Naive thymus-derived CD4-positive, alpha-beta T cell (primary cell): ENCODE measurements at regions of chr1 and their contacts with region 1.

Region 1: DNA sequence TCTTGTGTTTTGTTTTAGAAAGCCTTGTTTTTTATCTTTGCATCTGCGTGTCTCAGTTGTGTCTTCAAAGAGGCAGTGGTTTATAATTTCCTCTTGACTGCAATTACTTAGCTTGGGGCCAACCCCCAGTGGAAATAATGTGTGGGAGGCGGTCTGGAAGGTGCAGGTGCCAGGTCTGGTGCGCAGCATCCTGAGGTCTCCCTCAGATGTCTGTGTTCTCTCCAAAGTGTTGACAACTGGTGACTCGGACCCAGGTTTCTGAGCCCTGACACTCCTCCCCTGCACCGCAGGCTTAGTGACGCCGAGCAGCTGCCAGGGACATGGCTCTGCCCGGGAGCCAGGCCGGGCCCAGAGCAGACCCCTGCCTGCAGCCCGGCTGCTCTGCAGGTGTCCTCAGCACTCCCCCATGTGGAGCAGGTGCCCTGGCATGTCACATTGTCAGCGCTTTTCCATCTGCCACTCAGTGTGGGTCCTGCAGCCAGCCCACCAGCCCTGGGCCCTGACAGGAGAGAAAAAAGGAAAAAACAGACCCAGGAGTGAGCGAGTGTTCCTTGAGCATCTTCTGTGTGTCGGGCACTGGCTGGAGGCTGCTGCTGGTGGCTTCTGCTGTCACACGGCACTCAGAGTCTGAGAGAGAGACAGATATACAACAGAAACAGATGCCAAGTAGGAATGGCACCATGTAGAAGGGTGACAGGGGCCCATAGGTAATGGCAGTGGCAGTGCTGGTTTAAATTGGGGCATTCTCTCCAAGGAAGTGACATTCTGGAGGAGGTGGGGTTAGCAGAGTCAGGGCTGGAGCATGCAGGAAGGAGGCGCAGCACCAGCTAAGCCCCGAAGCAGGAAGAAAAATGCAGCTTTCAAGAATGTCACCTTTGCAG is 24.8 kb upstream of the SELENON start:
- DNase-seq: peak; percentile 53 to 97 (median 95)
- ATAC-seq: peak; percentile 92
- H3K4me3 ChIP-seq: peak overlapping the region; percentile 49
- H3K4me3 Mint-ChIP-seq: peak overlapping the region; percentile 71 to 91 (median 84)
- H3K27ac ChIP-seq: peak overlapping the region; percentile 77
- H3K27ac Mint-ChIP-seq: peak overlapping the region; percentile 79 to 99 (median 97)
- H3K4me1 ChIP-seq: peaks cover 35 to 78% of the 10 kb centered on the region in 2 donors
- H3K4me1 Mint-ChIP-seq: peaks cover 52 to 96% (median 86%) of the 10 kb centered on the region in 7 donors
- H3K27me3 ChIP-seq: no peaks in the 10 kb centered on the region
- H3K27me3 Mint-ChIP-seq: peaks cover 0 to 45% (median 0%) of the 10 kb centered on the region in 5 donors

Region 2: DNA sequence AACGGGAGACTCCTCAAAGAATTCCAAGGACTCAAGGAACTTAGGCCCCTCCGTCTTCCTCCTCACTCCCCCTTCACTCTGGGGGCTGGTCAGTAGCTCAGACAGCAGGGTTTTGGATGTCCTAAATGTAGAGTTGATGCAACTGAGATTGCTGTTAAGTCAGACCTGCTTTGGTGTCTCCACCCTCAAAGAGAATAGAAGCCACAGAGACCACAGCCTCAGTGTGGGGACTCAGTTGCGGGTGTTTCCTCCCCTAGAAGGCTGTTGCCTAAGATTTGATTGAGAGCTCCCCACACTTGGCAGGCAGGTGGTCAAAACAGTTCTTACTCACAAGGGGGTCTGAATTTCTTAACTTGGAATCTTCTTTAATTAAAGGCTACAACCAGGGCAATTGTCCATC is 151.0 kb before region 1 on chr1:
- CTCF ChIA-PET with region 1: interaction called, 15 read pairs
- POLR2A ChIA-PET with region 1: interaction called, 26 read pairs
- intact Hi-C with region 1: loop called (anchors 1 to 2 kb)
- DNase-seq: peak in 5 of 9 donors; percentile 43 to 54 (median 51)
- ATAC-seq: peak; percentile 18
- H3K4me3 ChIP-seq: peak overlapping the region; percentile 12
- H3K4me3 Mint-ChIP-seq: peak overlapping the region; percentile 77 to 100 (median 98)
- H3K27ac ChIP-seq: peak overlapping the region; percentile 51
- H3K27ac Mint-ChIP-seq: peak overlapping the region; percentile 47 to 98 (median 92)
- H3K4me1 ChIP-seq: peaks cover 23 to 48% of the 10 kb centered on the region in 2 donors
- H3K4me1 Mint-ChIP-seq: peaks cover 66 to 98% (median 87%) of the 10 kb centered on the region in 7 donors
- H3K27me3 ChIP-seq: no peaks in the 10 kb centered on the region
- H3K27me3 Mint-ChIP-seq: peaks cover 0 to 82% (median 0%) of the 10 kb centered on the region in 5 donors

Region 3: DNA sequence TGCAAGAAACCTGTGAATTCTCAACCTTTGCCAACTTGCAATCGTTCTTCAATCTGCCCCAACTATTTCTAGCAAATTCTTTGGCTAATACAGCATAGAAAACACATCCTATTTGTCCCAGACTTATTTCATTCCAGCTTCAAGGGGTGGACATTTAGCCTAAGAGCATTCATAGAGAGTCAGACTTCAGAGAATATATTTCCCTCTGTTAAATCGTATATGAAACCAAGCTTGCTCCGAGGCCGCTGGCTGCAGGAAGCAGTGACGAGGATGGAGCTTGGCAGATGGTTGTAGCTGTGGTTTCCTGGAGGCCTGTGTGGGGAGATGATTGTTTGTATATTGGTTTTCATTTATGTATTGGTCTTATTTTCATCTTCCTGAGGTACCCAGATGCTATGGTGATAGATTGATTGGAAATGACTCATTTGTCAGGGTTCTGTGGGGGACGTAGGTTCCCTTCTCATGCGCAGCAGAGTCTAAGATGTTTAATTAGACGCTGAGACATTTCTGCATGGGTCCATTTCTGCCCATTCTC is 132.5 kb before region 1 on chr1:
- CTCF ChIA-PET with region 1: interaction called, 6 read pairs
- POLR2A ChIA-PET with region 1: interaction called, 12 read pairs
- intact Hi-C with region 1: loop called in 1 of 2 experiments (anchors 1 kb)
- DNase-seq: peak; percentile 29 to 88 (median 84)
- ATAC-seq: peak; percentile 96
- H3K4me3 ChIP-seq: peak overlapping the region; percentile 53
- H3K4me3 Mint-ChIP-seq: peak overlapping the region; percentile 43 to 89 (median 72)
- H3K27ac ChIP-seq: peak overlapping the region; percentile 77
- H3K27ac Mint-ChIP-seq: peak overlapping the region; percentile 81 to 96 (median 92)
- H3K4me1 ChIP-seq: peaks cover 20 to 65% of the 10 kb centered on the region in 2 donors
- H3K4me1 Mint-ChIP-seq: peaks cover 54 to 96% (median 92%) of the 10 kb centered on the region in 7 donors
- H3K27me3 ChIP-seq: no peaks in the 10 kb centered on the region
- H3K27me3 Mint-ChIP-seq: peaks cover 0 to 85% (median 0%) of the 10 kb centered on the region in 5 donors

Region 4: DNA sequence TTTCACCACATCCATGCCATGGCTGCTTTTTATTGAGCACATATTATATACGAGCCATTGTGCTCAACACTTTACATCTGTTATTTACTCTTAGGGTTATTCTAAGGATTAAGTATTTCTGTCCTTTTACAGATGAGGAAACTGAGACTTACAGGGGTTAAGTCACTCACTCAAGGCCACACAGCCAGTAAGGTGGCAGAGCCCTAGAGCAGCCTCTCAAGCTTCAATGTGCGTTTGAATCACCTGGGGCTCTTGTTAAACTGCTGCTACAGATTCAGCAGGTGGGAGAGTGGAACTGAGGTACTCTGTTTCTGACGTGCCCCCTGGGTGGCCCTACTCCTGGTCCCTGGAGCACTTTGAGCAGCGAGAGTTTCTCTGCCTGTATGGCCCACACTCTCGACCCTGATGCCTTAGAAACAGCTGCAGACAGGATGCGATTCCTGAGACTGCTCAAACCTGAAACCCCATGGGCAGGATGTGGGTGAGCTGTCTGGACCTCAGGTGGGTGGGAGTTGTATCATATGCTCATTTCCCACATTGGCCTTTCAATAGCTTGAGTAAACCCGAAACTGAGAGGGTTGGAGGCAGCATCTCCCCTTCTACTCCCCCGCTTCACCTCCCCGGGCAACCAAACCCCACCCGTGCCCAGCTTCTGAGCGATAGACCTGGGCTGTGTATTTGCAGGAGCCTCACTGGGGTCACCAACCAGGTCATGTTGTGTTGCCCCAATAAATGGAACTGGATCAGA is 99.3 kb before region 1 on chr1:
- CTCF ChIA-PET with region 1: interaction called, 6 read pairs
- POLR2A ChIA-PET with region 1: interaction called, 40 read pairs
- intact Hi-C with region 1: loop called (anchors 1 kb)
- DNase-seq: peak; percentile 24 to 91 (median 86)
- ATAC-seq: peak; percentile 89
- H3K4me3 ChIP-seq: peak overlapping the region; percentile 31
- H3K4me3 Mint-ChIP-seq: peak overlapping the region; percentile 80 to 92 (median 84)
- H3K27ac ChIP-seq: peak overlapping the region; percentile 67
- H3K27ac Mint-ChIP-seq: peak overlapping the region; percentile 70 to 98 (median 94)
- H3K4me1 ChIP-seq: peaks cover 34 to 89% of the 10 kb centered on the region in 2 donors
- H3K4me1 Mint-ChIP-seq: peaks cover 58 to 96% (median 94%) of the 10 kb centered on the region in 7 donors
- H3K27me3 ChIP-seq: no peaks in the 10 kb centered on the region
- H3K27me3 Mint-ChIP-seq: peaks cover 0 to 80% (median 0%) of the 10 kb centered on the region in 5 donors

Region 5: GRCh38 chr1:25704267-25704691 is 70.9 kb before region 1 on chr1:
- CTCF ChIA-PET with region 1: no interaction called
- POLR2A ChIA-PET with region 1: interaction called, 6 read pairs
- intact Hi-C with region 1: loop called in 1 of 2 experiments (anchors 2 kb)
- DNase-seq: peak in 7 of 9 donors; percentile 28 to 68 (median 60)
- ATAC-seq: peak; percentile 92
- H3K4me3 ChIP-seq: no peak overlapping the region
- H3K4me3 Mint-ChIP-seq: peak overlapping the region in 7 of 10 donors; percentile 15 to 56 (median 50)
- H3K27ac ChIP-seq: peak overlapping the region; percentile 56
- H3K27ac Mint-ChIP-seq: peak overlapping the region; percentile 62 to 94 (median 91)
- H3K4me1 ChIP-seq: peaks cover 15 to 49% of the 10 kb centered on the region in 2 donors
- H3K4me1 Mint-ChIP-seq: peaks cover 30 to 86% (median 68%) of the 10 kb centered on the region in 7 donors
- H3K27me3 ChIP-seq: no peaks in the 10 kb centered on the region
- H3K27me3 Mint-ChIP-seq: peaks cover 0 to 40% (median 0%) of the 10 kb centered on the region in 5 donors

Region 6: GRCh38 chr1:25754470-25755181 is 20.5 kb before region 1 on chr1:
- CTCF ChIA-PET with region 1: interaction called, 9 read pairs
- POLR2A ChIA-PET with region 1: interaction called, 45 read pairs
- intact Hi-C with region 1: loop called in 1 of 2 experiments (anchors 1 kb)
- DNase-seq: peak in 7 of 9 donors; percentile 57 to 70 (median 64)
- ATAC-seq: peak; percentile 89
- H3K4me3 ChIP-seq: no peak overlapping the region
- H3K4me3 Mint-ChIP-seq: peak overlapping the region; percentile 2 to 87 (median 69)
- H3K27ac ChIP-seq: peak overlapping the region; percentile 62
- H3K27ac Mint-ChIP-seq: peak overlapping the region in 8 of 9 donors; percentile 92 to 99 (median 96)
- H3K4me1 ChIP-seq: peaks cover 0 to 35% of the 10 kb centered on the region in 2 donors
- H3K4me1 Mint-ChIP-seq: peaks cover 22 to 79% (median 68%) of the 10 kb centered on the region in 7 donors
- H3K27me3 ChIP-seq: no peaks in the 10 kb centered on the region
- H3K27me3 Mint-ChIP-seq: peaks cover 0 to 21% (median 0%) of the 10 kb centered on the region in 5 donors